ENCODE measurements at regions of chr3 and their contacts with region 1.

Region 1: GRCh38 chr3:50227390-50228183 is 8.4 kb upstream of the GNAI2 start:
- DNase-seq: peak; percentile 55
- H3K4me3 ChIP-seq: peak overlapping the region; percentile 83
- H3K27ac ChIP-seq: no peak overlapping the region
- H3K27me3 ChIP-seq: peaks cover 10% of the 10 kb centered on the region
- CTCF ChIP-seq: peak; percentile 64

Region 2: DNA sequence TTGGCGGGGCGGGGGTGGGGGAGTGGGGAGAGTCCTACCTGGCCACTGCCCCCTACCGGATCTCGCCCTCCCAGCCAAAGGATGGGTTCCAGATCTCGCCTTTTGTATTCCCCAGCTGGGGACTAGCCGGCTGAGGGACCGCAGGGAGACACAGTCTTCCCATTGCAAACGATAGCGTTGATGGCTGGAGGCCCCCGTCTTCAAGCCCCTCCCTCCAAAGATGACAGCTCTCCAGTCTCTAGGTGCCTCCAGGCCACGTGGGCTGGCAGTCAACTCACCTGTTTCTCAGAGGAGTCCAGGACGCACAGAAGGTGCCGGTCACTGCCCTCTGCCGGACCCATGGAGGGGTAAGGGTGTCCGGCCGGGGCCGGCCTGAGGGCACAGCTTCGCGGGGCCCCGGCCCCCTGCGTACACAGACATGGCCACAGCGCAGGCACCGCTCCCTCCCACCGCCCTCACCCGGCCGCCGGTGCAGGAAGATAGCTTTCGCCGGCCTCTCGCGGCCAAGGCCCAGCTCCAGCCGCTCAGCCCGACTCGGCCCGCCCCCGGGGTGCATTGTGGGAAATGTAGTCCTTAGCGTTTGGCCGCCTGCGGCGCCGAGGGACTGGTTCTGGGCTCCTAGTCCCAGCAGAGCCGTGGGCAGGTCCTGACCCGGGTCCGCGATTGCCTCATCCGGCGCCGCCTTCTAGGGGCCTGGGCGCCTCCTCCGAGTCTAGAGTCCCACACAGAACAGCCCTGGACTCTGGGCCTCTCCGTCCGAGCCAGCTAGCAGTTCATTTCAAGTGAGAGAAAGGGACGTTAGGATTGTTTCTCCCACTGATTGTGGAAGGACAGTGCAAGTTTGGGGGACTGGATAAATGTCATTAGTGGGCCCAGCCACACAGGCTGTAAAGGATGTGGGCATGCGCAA is 298.0 kb before region 1 on chr3 and contains the start of gene MON1A:
- CTCF ChIA-PET with region 1: no interaction called
- POLR2A ChIA-PET with region 1: no interaction called
- DNase-seq: peak; percentile 55
- H3K4me3 ChIP-seq: peak within 1 kb of the TSS; percentile 79
- H3K27ac ChIP-seq: peak within 1 kb of the TSS; percentile 33
- H3K27me3 ChIP-seq: no peaks in the 10 kb centered on the region
- CTCF ChIP-seq: peak; percentile 23
- polyA plus RNA-seq, gene MON1A: 7.1 and 8.1 TPM in 2 replicates

Region 3: GRCh38 chr3:50205414-50206276 is 21.9 kb before region 1 on chr3:
- CTCF ChIA-PET with region 1: interaction called, 22 read pairs
- POLR2A ChIA-PET with region 1: no interaction called
- DNase-seq: no peak
- H3K4me3 ChIP-seq: peak overlapping the region; percentile 46
- H3K27ac ChIP-seq: no peak overlapping the region
- H3K27me3 ChIP-seq: peaks cover 55% of the 10 kb centered on the region
- CTCF ChIP-seq: no peak

Region 4: DNA sequence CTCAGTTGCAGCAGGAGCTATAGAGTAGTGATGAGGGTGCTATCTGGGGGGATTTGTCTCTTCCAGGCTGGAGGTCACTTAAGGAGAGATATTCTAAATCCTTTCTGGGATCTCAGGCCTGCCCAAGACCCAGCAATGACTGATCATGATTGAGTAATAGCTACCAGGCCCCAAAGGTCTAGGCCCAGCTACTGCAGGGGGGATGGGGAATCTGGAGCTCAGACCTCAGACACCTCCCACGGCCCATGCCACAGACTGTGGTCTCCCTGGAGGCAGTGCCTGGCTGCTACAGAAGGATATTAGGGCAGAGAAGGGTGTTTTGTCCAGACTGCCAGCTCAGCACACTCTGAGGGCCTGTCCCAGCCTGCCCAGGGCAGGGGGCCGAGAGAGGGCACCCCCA is 15.7 kb before region 1 on chr3:
- CTCF ChIA-PET with region 1: interaction called, 14 read pairs
- POLR2A ChIA-PET with region 1: no interaction called
- DNase-seq: no peak
- H3K4me3 ChIP-seq: no peak overlapping the region
- H3K27ac ChIP-seq: no peak overlapping the region
- H3K27me3 ChIP-seq: peaks cover 16% of the 10 kb centered on the region
- CTCF ChIP-seq: no peak

Region 5: DNA sequence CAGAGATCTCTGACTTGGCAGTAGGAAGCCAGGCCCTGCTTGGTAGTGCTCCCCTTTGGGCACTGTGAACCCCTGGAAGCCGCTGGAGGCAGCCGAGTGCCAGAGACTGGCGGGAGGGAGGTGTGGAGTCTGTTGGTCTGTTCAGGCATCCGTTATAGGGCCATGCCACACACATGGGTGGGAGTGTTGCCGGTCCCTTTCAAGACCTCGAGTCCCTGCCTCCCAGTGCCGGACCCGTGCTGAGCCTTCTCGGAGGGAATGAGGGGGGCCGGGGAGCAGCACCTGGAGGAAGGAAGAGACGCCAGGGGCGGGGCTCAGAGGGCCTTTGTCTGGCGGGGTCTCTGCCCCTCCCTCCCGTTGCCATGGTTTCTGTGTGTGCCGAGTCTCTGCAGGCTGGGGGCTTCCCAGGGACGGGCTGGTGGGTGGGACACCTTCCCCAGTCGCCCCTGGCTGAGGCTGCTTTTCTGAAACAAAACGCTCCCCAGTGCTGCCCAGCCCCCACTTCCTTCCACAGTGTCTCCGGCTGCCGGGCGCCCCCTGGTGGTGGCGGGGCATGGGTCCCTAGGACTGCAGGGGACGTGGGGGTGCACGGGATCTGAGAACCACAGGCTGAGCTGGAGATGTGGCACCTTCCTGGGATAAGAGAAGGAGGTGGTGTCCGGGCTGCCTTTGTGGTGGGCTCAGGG is 18.4 kb after region 1 on chr3:
- CTCF ChIA-PET with region 1: interaction called, 45 read pairs
- POLR2A ChIA-PET with region 1: interaction called, 3 read pairs
- DNase-seq: no peak
- H3K4me3 ChIP-seq: peak overlapping the region; percentile 49
- H3K27ac ChIP-seq: peak overlapping the region; percentile 91
- H3K27me3 ChIP-seq: no peaks in the 10 kb centered on the region
- CTCF ChIP-seq: peak; percentile 97

Region 6: GRCh38 chr3:50303013-50303815 is 75.6 kb after region 1 on chr3 and contains the start of gene HYAL1:
- CTCF ChIA-PET with region 1: no interaction called
- POLR2A ChIA-PET with region 1: no interaction called
- DNase-seq: no peak
- H3K4me3 ChIP-seq: no peak within 1 kb of the TSS
- H3K27ac ChIP-seq: no peak within 1 kb of the TSS
- H3K27me3 ChIP-seq: no peaks in the 10 kb centered on the region
- CTCF ChIP-seq: no peak; the same call in 1 of the 2 replicates
- polyA plus RNA-seq, gene HYAL1: 0.25 and 0.32 TPM in 2 replicates

Region 7: GRCh38 chr3:50370594-50370993 is 143.0 kb after region 1 on chr3:
- CTCF ChIA-PET with region 1: no interaction called
- POLR2A ChIA-PET with region 1: no interaction called
- DNase-seq: no peak
- H3K4me3 ChIP-seq: no peak overlapping the region
- H3K27ac ChIP-seq: no peak overlapping the region
- H3K27me3 ChIP-seq: peaks cover 45% of the 10 kb centered on the region
- CTCF ChIP-seq: peak; percentile 21; the same call in 1 of the 2 replicates